K562 (cell line): ENCODE measurements at regions of chr12 and their contacts with region 1.

Region 1: GRCh38 chr12:109775172-109775881 is 57.9 kb downstream of the TRPV4 start:
- DNase-seq: peak; percentile 77 to 86 (median 84)
- ATAC-seq: peak; percentile 96
- H3K4me3 ChIP-seq: no peak overlapping the region
- H3K27ac ChIP-seq: no peak overlapping the region
- H3K4me1 ChIP-seq: peaks cover 0 to 9% of the 10 kb centered on the region in 2 experiments; a peak in 3 of 5 replicates
- H3K27me3 ChIP-seq: peaks cover 2 to 32% of the 10 kb centered on the region in 2 experiments; a peak in 4 of 5 replicates
- CTCF ChIP-seq: peak; percentile 94 to 95 (median 94)
- EP300 ChIP-seq: no peak
- POLR2A ChIP-seq: no peak
- RAD21 ChIP-seq: peak; percentile 81 to 95

Region 2: GRCh38 chr12:109518820-109519665 is 256.3 kb before region 1 on chr12:
- CTCF ChIA-PET with region 1: interaction called, 14 read pairs
- POLR2A ChIA-PET with region 1: no interaction called
- in situ Hi-C with region 1: loop called (anchors 5 kb)
- intact Hi-C with region 1: loop called (anchors 1 kb)
- DNase-seq: peak; percentile 65 to 79 (median 76)
- ATAC-seq: peak; percentile 92
- H3K4me3 ChIP-seq: no peak overlapping the region
- H3K27ac ChIP-seq: no peak overlapping the region
- H3K4me1 ChIP-seq: no peaks in the 10 kb centered on the region
- H3K27me3 ChIP-seq: no peaks in the 10 kb centered on the region
- CTCF ChIP-seq: peak; percentile 78 to 88 (median 82)
- EP300 ChIP-seq: no peak
- POLR2A ChIP-seq: no peak
- RAD21 ChIP-seq: peak; percentile 43 to 68

Region 3: GRCh38 chr12:109592905-109593272 is 182.4 kb before region 1 on chr12:
- CTCF ChIA-PET with region 1: interaction called, 17 read pairs
- POLR2A ChIA-PET with region 1: no interaction called
- in situ Hi-C with region 1: loop called (anchors 5 kb)
- intact Hi-C with region 1: loop called (anchors 1 kb)
- DNase-seq: no peak
- ATAC-seq: no peak
- H3K4me3 ChIP-seq: no peak overlapping the region
- H3K27ac ChIP-seq: no peak overlapping the region
- H3K4me1 ChIP-seq: peaks cover 1 to 9% of the 10 kb centered on the region in 2 experiments; a peak in 3 of 5 replicates
- H3K27me3 ChIP-seq: no peaks in the 10 kb centered on the region
- CTCF ChIP-seq: no peak
- EP300 ChIP-seq: no peak
- POLR2A ChIP-seq: no peak
- RAD21 ChIP-seq: no peak